Mammary epithelial cell (primary cell): ENCODE measurements at regions of chr17 and their contacts with region 1.

Region 1: GRCh38 chr17:17836250-17836817 is 452 bp downstream of the SREBF1 start:
- DNase-seq: peak; percentile 93
- H3K4me3 ChIP-seq: peak overlapping the region; percentile 54 to 90 (median 87)
- H3K27ac ChIP-seq: peak overlapping the region; percentile 98
- H3K4me1 ChIP-seq: peaks cover 56% of the 10 kb centered on the region
- H3K27me3 ChIP-seq: no peaks in the 10 kb centered on the region
- CTCF ChIP-seq: no peak

Region 2: GRCh38 chr17:17694169-17695081 is 141.9 kb before region 1 on chr17:
- CTCF ChIA-PET with region 1: no interaction called
- dilution Hi-C with region 1: no loop called
- in situ Hi-C with region 1: no loop called
- intact Hi-C with region 1: loop called (anchors 5 kb)
- DNase-seq: peak; percentile 71
- H3K4me3 ChIP-seq: peak overlapping the region; percentile 49 to 63 (median 57)
- H3K27ac ChIP-seq: peak overlapping the region; percentile 84
- H3K4me1 ChIP-seq: peaks cover 87% of the 10 kb centered on the region
- H3K27me3 ChIP-seq: no peaks in the 10 kb centered on the region
- CTCF ChIP-seq: no peak

Region 3: DNA sequence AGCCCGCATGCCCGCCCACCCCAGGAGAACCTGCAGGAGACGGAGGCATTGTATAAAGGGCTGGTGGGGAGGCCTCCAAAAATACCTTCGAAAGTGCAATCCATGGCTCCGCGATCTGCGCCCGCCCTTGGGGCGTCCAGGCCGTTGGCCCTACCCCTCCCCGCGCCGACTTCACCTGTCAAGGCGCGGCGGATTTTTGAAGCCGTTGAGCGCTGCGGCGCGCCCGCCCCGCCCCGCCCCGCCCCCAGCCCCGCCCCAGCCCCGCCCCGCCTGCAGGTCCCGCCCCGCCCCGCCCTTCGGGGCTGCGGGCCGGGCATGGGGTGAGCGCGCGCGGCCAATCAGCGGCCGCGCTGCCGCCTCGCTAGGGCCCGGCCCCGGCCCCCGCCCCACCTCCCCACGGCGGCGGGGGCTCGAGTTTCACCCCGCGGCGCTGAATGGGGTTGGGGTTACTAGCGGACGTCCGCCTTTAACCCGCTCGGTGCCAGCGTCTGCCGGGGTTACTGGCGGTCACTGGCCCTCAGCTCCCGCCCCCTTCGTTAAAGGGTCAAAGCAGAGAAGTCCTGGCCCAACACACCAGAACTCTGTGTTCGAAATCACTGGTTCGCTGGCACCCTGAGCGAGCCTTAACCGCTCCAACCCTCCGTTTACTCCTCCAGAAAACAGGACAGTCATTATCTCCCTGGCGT is 12.8 kb before region 1 on chr17:
- CTCF ChIA-PET with region 1: no interaction called
- dilution Hi-C with region 1: no loop called
- in situ Hi-C with region 1: no loop called
- intact Hi-C with region 1: loop called (anchors 1 kb)
- DNase-seq: peak; percentile 86
- H3K4me3 ChIP-seq: peak overlapping the region; percentile 36 to 51 (median 46)
- H3K27ac ChIP-seq: peak overlapping the region; percentile 71
- H3K4me1 ChIP-seq: peaks cover 85% of the 10 kb centered on the region
- H3K27me3 ChIP-seq: no peaks in the 10 kb centered on the region
- CTCF ChIP-seq: no peak

Region 4: GRCh38 chr17:17859909-17860765 is 23.8 kb after region 1 on chr17:
- CTCF ChIA-PET with region 1: no interaction called
- dilution Hi-C with region 1: loop called (anchors 5 kb)
- in situ Hi-C with region 1: no loop called
- intact Hi-C with region 1: loop called (anchors 1 kb)
- DNase-seq: peak; percentile 43
- H3K4me3 ChIP-seq: no peak overlapping the region
- H3K27ac ChIP-seq: no peak overlapping the region
- H3K4me1 ChIP-seq: peaks cover 21% of the 10 kb centered on the region
- H3K27me3 ChIP-seq: no peaks in the 10 kb centered on the region
- CTCF ChIP-seq: peak; percentile 94 to 98

Region 5: DNA sequence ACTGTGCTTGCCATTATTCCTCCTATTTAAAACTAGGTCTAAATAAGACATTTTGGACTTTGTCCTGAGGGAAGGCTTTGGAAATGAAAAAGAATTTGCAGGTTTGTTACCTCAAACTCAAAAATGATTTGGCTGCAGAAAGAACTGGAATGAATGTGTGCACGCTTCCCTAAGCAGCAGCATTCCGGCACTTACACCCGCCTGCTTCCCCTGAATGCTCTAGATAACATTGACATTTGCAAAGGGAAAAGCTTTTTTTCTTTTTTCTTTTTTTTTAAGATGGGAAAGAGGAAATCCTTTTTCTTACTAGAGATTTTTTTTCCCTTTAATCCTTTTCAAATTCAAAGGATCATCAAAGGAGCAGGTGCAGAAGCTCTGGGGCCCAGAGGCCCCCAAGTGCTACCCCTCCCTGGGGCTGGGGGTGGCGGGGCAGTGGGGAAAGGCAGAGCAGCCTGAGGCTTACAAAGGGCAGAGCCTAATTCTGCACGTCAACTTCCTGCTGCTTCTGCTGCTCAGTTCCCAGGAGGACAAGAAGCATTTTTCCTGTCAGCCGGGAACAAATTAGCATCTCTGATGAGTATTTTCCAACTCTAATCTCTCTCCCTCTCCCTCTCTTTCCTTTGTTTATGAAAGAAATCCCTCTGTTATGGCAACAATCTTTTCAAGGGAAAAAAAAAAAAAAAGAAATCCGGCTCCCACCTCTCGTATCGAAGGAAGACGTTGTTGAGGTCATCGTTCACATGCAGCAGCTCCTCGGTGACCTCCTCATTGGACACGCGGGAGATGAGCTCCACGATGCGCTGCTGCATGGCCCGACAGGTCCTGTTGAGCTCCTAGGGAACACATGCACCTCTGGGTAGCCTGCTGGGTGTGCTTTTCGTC is 32.5 kb after region 1 on chr17:
- CTCF ChIA-PET with region 1: no interaction called
- dilution Hi-C with region 1: loop called (anchors 5 kb)
- in situ Hi-C with region 1: no loop called
- intact Hi-C with region 1: no loop called
- DNase-seq: no peak
- H3K4me3 ChIP-seq: no peak overlapping the region
- H3K27ac ChIP-seq: no peak overlapping the region
- H3K4me1 ChIP-seq: no peaks in the 10 kb centered on the region
- H3K27me3 ChIP-seq: no peaks in the 10 kb centered on the region
- CTCF ChIP-seq: no peak